Activated naive CD4-positive, alpha-beta T cell treated with anti-CD3 and anti-CD28 coated beads for 36 hours (primary cell): ENCODE measurements at regions of chr4 and their contacts with region 1.

Region 1: GRCh38 chr4:123671633-123672404 is 275.2 kb downstream of the SPRY1 start:
- DNase-seq: peak; percentile 55
- H3K4me3 Mint-ChIP-seq: no peak overlapping the region
- H3K27ac Mint-ChIP-seq: no peak overlapping the region
- H3K4me1 Mint-ChIP-seq: peaks cover 17% of the 10 kb centered on the region
- H3K27me3 Mint-ChIP-seq: peaks cover 44% of the 10 kb centered on the region

Region 2: DNA sequence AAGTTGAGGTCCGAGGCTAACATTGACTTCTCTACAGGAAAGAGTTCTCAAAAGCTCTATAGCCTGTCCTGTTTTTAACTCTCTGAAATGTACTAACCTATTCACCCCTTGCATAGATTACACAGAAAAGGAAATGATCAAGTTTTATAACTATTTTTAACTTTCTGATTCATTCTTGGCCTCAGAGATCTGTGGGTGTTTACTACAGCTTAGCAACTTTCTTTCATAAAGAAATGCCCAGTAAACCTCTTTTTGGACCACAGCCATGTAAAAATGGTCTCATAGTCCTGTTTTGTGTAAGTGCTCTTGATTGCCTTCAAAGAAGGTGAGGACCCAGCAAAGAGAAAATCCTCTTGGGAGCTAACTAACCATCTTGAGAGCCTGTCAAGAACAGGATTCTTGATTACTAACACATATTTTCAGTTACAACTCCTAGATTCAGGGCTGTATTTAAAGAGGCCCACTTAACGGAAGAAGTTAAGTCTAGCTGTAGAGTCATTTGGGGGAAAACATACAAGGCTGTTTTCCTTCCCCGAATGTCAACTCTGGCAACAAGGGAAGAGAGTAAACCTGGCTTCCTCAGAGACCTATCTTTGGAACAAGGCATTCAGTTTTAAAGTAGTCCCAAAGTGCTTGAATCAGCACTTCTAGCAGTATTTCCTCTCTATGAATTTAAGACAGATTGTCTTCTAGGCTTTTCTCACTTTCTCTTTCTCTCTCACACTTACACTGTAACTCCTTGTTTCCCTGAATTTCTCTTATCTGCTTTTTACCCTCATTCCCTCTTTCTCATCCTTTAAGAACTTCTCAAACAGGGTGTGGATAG is 1129.2 kb before region 1 on chr4:
- CTCF ChIA-PET with region 1: no interaction called
- intact Hi-C with region 1: loop called (anchors 5 kb)
- DNase-seq: no peak
- H3K4me3 Mint-ChIP-seq: peak overlapping the region; percentile 52
- H3K27ac Mint-ChIP-seq: peak overlapping the region; percentile 100
- H3K4me1 Mint-ChIP-seq: peaks cover 94% of the 10 kb centered on the region
- H3K27me3 Mint-ChIP-seq: no peaks in the 10 kb centered on the region

Region 3: DNA sequence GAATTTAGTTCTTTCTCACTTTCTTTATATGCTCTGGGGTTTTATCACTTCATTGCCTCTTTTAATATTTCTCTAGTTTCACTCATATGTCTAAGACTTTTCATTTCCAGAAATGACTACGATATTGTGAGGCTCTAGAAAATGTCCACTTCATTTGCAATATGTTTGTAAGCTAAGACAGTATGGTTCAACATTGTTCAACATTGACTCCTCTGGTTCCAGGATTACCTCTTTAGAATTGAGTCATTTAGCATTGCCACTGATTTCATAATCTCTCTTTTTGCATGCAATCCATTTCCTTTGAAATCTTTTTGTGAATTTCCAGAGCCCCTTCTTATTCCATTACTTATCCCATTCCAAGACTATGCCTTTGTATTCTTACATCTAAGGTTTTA is 907.0 kb before region 1 on chr4:
- CTCF ChIA-PET with region 1: no interaction called
- intact Hi-C with region 1: loop called (anchors 5 kb)
- DNase-seq: no peak
- H3K4me3 Mint-ChIP-seq: no peak overlapping the region
- H3K27ac Mint-ChIP-seq: peak overlapping the region; percentile 50
- H3K4me1 Mint-ChIP-seq: peaks cover 30% of the 10 kb centered on the region
- H3K27me3 Mint-ChIP-seq: no peaks in the 10 kb centered on the region

Region 4: GRCh38 chr4:123421227-123421936 is 250.4 kb before region 1 on chr4:
- CTCF ChIA-PET with region 1: no interaction called
- intact Hi-C with region 1: loop called (anchors 2 kb)
- DNase-seq: no peak
- H3K4me3 Mint-ChIP-seq: peak overlapping the region; percentile 9
- H3K27ac Mint-ChIP-seq: peak overlapping the region; percentile 91
- H3K4me1 Mint-ChIP-seq: peaks cover 39% of the 10 kb centered on the region
- H3K27me3 Mint-ChIP-seq: no peaks in the 10 kb centered on the region

Region 5: GRCh38 chr4:123443401-123444289 is 228.2 kb before region 1 on chr4:
- CTCF ChIA-PET with region 1: no interaction called
- intact Hi-C with region 1: loop called (anchors 1 kb)
- DNase-seq: peak; percentile 65
- H3K4me3 Mint-ChIP-seq: peak overlapping the region; percentile 37
- H3K27ac Mint-ChIP-seq: peak overlapping the region; percentile 74
- H3K4me1 Mint-ChIP-seq: peaks cover 16% of the 10 kb centered on the region
- H3K27me3 Mint-ChIP-seq: peaks cover 2% of the 10 kb centered on the region

Region 6: GRCh38 chr4:123477711-123478209 is 194.1 kb before region 1 on chr4:
- CTCF ChIA-PET with region 1: no interaction called
- intact Hi-C with region 1: loop called (anchors 5 kb)
- DNase-seq: peak; percentile 83
- H3K4me3 Mint-ChIP-seq: no peak overlapping the region
- H3K27ac Mint-ChIP-seq: no peak overlapping the region
- H3K4me1 Mint-ChIP-seq: peaks cover 25% of the 10 kb centered on the region
- H3K27me3 Mint-ChIP-seq: peaks cover 2% of the 10 kb centered on the region

Region 7: GRCh38 chr4:123640271-123640670 is 31.5 kb before region 1 on chr4:
- CTCF ChIA-PET with region 1: no interaction called
- intact Hi-C with region 1: loop called (anchors 1 kb)
- DNase-seq: no peak
- H3K4me3 Mint-ChIP-seq: no peak overlapping the region
- H3K27ac Mint-ChIP-seq: no peak overlapping the region
- H3K4me1 Mint-ChIP-seq: peaks cover 7% of the 10 kb centered on the region
- H3K27me3 Mint-ChIP-seq: peaks cover 11% of the 10 kb centered on the region

Region 8: DNA sequence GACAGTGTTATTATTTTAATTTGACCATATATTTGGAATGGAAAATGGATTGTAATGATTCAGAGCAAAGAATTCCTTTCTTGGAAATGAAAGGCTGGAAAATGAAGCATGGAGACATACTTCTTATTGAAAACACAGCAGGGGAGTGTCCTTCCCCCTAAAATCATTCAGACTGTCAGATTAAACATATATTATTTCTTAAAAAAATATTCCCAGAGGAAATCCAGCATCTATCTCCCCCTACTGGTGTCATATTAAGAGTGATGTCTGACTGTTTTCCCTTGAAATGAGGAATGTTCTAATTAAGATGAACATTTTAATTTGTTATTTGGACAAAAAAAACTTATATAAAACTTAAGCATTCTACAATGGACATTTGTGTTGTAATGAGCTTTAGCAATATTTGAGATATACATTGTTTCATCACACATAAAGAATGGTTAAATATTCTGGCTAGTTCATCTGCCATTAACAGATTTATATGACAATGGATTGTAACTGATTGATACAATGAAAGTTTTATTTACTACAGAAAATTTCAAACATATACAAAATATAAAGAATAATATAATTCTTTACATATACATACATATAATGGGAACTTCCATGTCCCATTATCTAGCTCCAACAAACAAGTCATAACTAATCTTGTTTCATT is 10.6 kb before region 1 on chr4:
- CTCF ChIA-PET with region 1: no interaction called
- intact Hi-C with region 1: no loop called
- DNase-seq: no peak
- H3K4me3 Mint-ChIP-seq: no peak overlapping the region
- H3K27ac Mint-ChIP-seq: no peak overlapping the region
- H3K4me1 Mint-ChIP-seq: peaks cover 11% of the 10 kb centered on the region
- H3K27me3 Mint-ChIP-seq: peaks cover 20% of the 10 kb centered on the region